ENCODE measurements at regions of chr9 and their contacts with region 1.

Region 1: DNA sequence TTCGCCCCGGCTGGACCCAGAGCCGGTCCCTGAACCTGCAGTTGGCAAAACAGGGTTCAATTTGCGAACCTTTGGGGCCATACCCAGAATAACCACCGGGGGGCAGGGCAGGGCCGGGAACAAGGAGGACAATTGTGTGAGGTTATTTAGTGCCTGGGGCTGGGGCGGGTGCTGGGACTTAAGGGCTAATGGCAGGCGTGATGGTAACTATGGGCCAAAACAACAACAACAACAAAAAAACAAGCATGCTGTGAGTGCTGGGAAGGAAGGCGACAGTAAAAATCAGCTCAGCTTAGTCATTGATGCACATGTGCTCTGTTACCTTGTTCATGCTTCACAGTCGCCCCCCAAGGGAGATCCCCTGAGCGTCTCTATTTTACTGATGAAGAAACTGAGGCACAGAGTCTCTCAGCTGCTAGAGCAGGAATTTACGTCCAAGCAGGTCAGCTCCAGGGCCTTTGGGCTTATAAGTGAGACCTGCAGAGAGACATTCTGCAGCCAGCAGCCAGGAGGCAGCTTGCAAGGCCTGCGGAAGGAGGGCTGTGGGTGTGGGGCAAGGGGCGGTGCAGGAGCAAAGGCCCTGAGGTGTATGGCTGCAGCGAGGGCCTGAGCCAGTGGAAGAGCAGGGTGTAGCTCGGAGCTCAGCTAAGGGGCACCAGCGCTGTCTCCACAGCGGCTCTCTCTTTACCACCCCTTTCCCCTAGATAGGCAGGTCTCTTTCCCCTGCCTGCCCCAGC is 106.0 kb downstream of the PHF2 start:
- DNase-seq: peak; percentile 61
- H3K4me3 Mint-ChIP-seq: no peak overlapping the region
- H3K27ac Mint-ChIP-seq: no peak overlapping the region
- H3K4me1 Mint-ChIP-seq: peaks cover 8% of the 10 kb centered on the region
- H3K27me3 Mint-ChIP-seq: no peaks in the 10 kb centered on the region
- CTCF ChIP-seq: peak; percentile 81

Region 2: DNA sequence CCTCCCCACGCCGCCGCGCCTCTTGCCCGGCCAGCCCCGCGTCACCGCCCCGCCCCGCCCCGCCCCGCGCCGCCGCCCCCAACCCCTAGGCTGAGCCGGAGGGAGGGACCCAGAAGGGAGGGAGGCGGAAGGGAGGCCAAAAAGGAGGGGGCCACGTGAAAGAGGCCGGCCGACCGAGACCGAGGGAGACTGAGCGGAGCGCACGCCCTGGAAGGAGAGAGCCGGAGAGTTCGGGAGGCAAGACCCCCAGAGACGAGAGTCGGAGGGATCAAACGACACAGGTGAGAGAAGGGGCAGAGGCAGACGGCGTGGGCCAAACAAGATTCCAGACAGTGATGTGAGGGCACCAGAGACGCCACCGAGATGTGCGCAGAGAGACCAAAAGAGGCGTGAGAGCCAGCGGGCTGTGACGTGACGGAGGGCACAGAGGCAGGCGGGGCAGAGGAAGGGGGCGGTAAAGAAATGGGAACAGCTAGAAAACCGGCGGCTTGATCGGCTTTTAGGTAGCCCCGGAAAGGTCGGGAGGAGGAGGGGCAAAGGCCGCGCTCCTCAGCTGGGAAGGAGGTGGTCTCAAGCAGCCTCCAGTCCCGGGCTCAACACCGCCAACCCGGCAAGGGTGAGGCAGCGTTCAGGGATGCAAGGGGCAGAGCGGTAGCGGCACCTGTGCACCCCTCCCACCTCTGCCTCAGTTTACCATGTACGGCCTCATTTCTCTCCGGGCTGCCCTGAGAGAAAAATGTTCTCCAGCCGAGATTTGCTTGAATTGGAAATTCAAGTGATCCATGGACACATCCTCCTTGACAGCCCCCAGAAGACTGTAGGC is 273.2 kb after region 1 on chr9:
- CTCF ChIA-PET with region 1: interaction called, 109 read pairs
- POLR2A ChIA-PET with region 1: no interaction called
- intact Hi-C with region 1: no loop called
- DNase-seq: no peak
- H3K4me3 Mint-ChIP-seq: no peak overlapping the region
- H3K27ac Mint-ChIP-seq: peak overlapping the region; percentile 24
- H3K4me1 Mint-ChIP-seq: no peaks in the 10 kb centered on the region
- H3K27me3 Mint-ChIP-seq: peaks cover 36% of the 10 kb centered on the region
- CTCF ChIP-seq: no peak

Region 3: DNA sequence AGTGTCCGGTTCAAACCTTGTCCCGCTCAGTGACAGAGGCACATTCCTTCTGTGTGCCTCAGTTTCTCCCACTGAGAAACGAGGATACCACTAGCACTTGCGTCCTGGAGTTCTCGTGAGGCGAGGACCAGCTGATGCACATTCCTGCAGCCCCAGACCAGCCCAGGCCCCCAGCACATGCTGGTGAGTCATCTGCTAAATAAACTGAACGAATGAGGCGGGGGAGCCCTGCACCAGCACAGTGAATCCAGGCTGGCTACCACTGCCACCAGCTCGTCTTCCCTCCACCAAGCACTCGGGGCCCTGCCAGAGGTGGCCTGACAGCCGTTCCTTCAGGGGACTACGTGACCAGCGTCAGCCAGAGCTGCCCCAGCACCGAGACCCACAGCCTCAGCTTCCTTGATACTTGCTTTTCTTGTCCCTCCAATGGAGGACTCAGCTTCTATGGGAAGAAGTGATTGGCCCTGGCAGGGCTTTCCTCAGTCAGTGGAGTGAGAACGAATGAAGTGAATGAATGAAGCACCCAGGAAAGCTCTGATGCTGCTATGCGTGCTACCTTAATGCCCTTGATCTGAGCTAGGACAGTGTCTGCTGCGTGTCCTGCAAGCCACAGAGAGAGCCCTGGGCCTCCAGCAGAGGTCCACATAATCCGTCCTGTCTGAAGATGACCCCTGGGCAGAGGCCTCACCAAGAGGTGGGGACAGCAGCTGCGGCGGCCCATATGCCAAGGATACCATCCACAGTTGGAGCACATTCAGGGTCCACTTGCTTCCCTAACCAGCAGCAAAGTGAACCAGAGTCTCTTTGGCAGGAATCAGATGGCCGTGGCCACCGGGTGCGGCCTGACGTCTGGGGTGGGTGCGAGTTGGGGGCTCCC is 286.3 kb after region 1 on chr9:
- CTCF ChIA-PET with region 1: interaction called, 109 read pairs
- POLR2A ChIA-PET with region 1: no interaction called
- intact Hi-C with region 1: loop called (anchors 1 kb)
- DNase-seq: no peak
- H3K4me3 Mint-ChIP-seq: no peak overlapping the region
- H3K27ac Mint-ChIP-seq: no peak overlapping the region
- H3K4me1 Mint-ChIP-seq: peaks cover 9% of the 10 kb centered on the region
- H3K27me3 Mint-ChIP-seq: no peaks in the 10 kb centered on the region
- CTCF ChIP-seq: no peak

Region 4: DNA sequence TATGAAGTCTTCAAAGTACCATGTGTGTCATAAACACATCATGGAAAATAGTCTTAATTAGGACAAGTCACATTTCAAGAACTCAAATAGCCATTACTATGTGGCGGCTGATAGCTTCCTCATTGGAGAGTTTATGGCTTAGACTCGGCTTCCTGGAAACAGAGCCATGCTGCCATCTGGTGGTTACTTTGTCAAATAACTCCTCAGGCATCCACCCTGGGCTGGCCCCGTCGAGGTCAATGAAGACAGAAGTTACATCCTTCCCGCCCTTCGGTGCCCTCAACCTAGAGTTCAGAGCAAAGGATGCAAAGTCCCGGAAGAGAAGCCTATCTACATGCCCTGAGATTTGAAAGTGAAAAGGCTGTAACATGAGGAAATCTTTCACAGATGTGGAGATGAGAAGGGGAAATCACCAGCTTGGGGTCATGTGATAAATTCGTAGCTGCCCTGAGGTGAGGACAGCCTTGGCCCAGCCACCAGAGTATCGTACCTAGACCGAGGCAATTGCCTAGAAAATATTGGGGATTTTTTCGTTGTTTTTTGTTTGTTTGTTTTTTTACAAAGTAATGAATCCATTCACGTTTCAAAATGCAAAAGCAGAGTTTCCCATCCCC is 531.2 kb after region 1 on chr9:
- CTCF ChIA-PET with region 1: interaction called, 45 read pairs
- POLR2A ChIA-PET with region 1: no interaction called
- intact Hi-C with region 1: loop called (anchors 1 kb)
- DNase-seq: peak; percentile 85
- H3K4me3 Mint-ChIP-seq: no peak overlapping the region
- H3K27ac Mint-ChIP-seq: no peak overlapping the region
- H3K4me1 Mint-ChIP-seq: peaks cover 11% of the 10 kb centered on the region
- H3K27me3 Mint-ChIP-seq: no peaks in the 10 kb centered on the region
- CTCF ChIP-seq: peak; percentile 72

Measured in MCF 10A (cell line).